B cell (primary cell): ENCODE measurements at regions of chr2 and their contacts with region 1.

Region 1: DNA sequence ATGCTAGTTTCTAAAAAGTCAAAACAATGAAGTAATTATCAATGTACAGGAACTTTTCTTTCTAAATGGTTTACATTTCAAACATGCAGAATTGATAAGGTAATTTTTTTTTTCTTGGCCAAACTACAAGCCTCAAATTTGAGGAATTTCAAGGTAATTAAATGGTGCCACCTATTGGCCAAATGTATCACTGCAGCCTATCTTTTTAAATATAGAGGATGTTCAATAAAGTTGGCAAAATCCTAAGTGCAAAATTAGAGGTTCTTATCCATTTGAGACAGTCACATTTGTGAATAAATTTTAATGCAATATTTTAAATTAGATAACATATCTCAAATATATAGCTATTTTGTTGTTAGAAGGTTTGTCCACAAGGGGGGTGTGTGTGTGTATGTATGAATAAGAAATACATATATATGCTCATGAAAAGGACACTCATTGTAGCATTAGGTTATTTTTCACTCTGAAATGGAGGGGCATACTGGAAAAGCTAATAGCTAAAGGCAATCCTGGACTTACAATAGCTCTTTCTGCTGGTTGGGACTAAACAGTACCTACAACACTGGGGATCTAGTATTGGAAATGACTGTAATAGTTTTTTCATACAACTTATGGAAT is 26.2 kb downstream of the MMADHC start:
- DNase-seq: peak; percentile 61
- ATAC-seq: no peak
- H3K4me3 ChIP-seq: no peak overlapping the region
- H3K4me3 Mint-ChIP-seq: no peak overlapping the region
- H3K27ac ChIP-seq: no peak overlapping the region
- H3K27ac Mint-ChIP-seq: no peak overlapping the region
- H3K4me1 ChIP-seq: peaks cover 0 to 9% of the 10 kb centered on the region in 2 donors
- H3K4me1 Mint-ChIP-seq: peaks cover 10% of the 10 kb centered on the region
- H3K27me3 ChIP-seq: no peaks in the 10 kb centered on the region
- H3K27me3 Mint-ChIP-seq: peaks cover 7% of the 10 kb centered on the region
- CTCF ChIP-seq: peak; percentile 98

Region 2: DNA sequence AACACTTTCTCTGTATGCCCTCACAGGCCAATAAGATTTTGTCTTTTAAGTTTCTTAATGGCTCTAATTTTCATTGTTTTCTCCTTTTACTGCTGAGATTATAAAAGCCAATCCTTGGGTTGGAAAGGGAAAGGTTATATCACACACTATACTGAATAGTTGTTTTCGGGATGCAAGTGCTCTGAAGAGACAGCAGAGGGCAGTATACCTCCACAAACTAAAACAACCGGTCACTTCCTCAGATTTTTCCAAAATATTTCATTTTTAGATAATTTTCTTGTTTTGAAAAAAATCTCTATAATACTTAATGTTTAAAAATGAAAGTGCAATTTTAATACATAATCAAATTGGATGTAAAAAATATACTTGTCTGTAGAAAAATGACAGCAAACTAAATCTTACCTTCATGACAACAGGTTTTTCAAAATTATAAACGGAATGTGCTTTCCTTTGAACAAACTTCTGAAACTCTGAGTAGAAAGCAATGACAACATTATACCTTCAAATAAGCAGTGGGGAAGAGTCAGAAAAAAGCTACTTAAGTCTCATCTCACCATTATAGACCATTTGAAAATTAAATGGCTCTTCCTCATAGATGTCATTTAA is 1623.6 kb before region 1 on chr2:
- CTCF ChIA-PET with region 1: interaction called, 4 read pairs
- POLR2A ChIA-PET with region 1: no interaction called
- intact Hi-C with region 1: loop called (anchors 5 kb)
- DNase-seq: peak; percentile 49
- ATAC-seq: no peak
- H3K4me3 ChIP-seq: no peak overlapping the region
- H3K4me3 Mint-ChIP-seq: no peak overlapping the region
- H3K27ac ChIP-seq: no peak overlapping the region
- H3K27ac Mint-ChIP-seq: no peak overlapping the region
- H3K4me1 ChIP-seq: no peaks in the 10 kb centered on the region
- H3K4me1 Mint-ChIP-seq: no peaks in the 10 kb centered on the region
- H3K27me3 ChIP-seq: no peaks in the 10 kb centered on the region
- H3K27me3 Mint-ChIP-seq: no peaks in the 10 kb centered on the region
- CTCF ChIP-seq: peak; percentile 98

Region 3: GRCh38 chr2:148565272-148565894 is 996.0 kb before region 1 on chr2:
- CTCF ChIA-PET with region 1: no interaction called
- POLR2A ChIA-PET with region 1: no interaction called
- intact Hi-C with region 1: loop called (anchors 5 kb)
- DNase-seq: no peak
- ATAC-seq: no peak
- H3K4me3 ChIP-seq: no peak overlapping the region
- H3K4me3 Mint-ChIP-seq: no peak overlapping the region
- H3K27ac ChIP-seq: no peak overlapping the region
- H3K27ac Mint-ChIP-seq: no peak overlapping the region
- H3K4me1 ChIP-seq: no peaks in the 10 kb centered on the region
- H3K4me1 Mint-ChIP-seq: no peaks in the 10 kb centered on the region
- H3K27me3 ChIP-seq: no peaks in the 10 kb centered on the region
- H3K27me3 Mint-ChIP-seq: peaks cover 12% of the 10 kb centered on the region
- CTCF ChIP-seq: no peak

Region 4: GRCh38 chr2:148926291-148926961 is 635.0 kb before region 1 on chr2:
- CTCF ChIA-PET with region 1: interaction called, 5 read pairs
- POLR2A ChIA-PET with region 1: no interaction called
- intact Hi-C with region 1: loop called (anchors 5 kb)
- DNase-seq: peak; percentile 67
- ATAC-seq: peak; percentile 81
- H3K4me3 ChIP-seq: peak overlapping the region; percentile 23 to 69 (median 50)
- H3K4me3 Mint-ChIP-seq: peak overlapping the region; percentile 81
- H3K27ac ChIP-seq: peak overlapping the region in 1 of 2 donors; percentile 13
- H3K27ac Mint-ChIP-seq: peak overlapping the region; percentile 62
- H3K4me1 ChIP-seq: peaks cover 7 to 22% of the 10 kb centered on the region in 2 donors
- H3K4me1 Mint-ChIP-seq: peaks cover 18% of the 10 kb centered on the region
- H3K27me3 ChIP-seq: no peaks in the 10 kb centered on the region
- H3K27me3 Mint-ChIP-seq: no peaks in the 10 kb centered on the region
- CTCF ChIP-seq: peak; percentile 80